ENCODE measurements at regions of chr6 and their contacts with region 1.

Region 1: GRCh38 chr6:153816366-153816765 is 222.7 kb upstream of the OPRM1 start:
- DNase-seq: no peak

Region 2: DNA sequence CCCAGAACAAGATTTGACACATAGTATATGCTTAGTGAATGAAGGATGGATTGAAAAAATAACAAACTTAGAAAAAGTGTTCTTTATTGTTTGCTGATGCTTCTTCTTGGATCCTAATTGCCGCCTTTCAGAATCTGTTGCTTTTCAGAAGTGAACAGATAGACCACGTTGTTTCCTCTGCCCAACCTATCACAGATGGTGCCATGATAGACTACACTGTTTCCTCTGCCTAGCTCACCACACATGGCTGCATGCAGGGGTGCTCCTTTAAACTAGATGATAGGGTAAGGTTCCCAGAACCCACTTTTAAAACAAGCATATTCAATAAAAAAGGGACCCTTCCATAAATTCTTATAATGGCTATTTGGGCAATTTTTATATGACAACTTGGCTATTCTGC is 680.7 kb before region 1 on chr6:
- intact Hi-C with region 1: loop called in 1 of 2 experiments (anchors 5 kb)
- DNase-seq: no peak

Measured in posterior vena cava (tissue), 2 donors.